ENCODE measurements at regions of chr17 and their contacts with region 1.

Region 1: DNA sequence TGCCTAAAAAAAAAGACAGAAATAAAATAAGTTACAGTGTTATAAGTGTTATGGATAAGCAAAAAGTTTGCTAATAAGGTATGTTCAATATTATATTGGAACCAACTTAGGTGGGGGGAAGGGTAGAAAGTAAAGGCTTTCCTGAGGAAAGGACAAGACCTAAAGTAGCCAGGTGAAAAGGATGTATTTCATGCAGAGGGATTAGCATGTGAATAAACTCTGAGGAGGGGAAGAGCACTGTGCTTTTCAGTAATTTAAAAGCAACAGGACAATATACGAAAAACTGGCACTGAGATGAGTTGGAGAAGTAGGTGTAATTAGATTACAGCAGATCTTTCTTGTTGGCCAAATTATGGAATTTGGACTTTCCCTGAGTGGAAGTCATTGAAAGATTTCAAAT is 7.6 kb downstream of the TOP2A start:
- DNase-seq: no peak
- H3K4me3 ChIP-seq: no peak overlapping the region
- H3K27ac ChIP-seq: no peak overlapping the region
- H3K4me1 ChIP-seq: peaks cover under 1% of the 10 kb centered on the region
- H3K27me3 ChIP-seq: no peaks in the 10 kb centered on the region
- CTCF ChIP-seq: no peak
- EP300 ChIP-seq: no peak
- POLR2A ChIP-seq: no peak

Region 2: DNA sequence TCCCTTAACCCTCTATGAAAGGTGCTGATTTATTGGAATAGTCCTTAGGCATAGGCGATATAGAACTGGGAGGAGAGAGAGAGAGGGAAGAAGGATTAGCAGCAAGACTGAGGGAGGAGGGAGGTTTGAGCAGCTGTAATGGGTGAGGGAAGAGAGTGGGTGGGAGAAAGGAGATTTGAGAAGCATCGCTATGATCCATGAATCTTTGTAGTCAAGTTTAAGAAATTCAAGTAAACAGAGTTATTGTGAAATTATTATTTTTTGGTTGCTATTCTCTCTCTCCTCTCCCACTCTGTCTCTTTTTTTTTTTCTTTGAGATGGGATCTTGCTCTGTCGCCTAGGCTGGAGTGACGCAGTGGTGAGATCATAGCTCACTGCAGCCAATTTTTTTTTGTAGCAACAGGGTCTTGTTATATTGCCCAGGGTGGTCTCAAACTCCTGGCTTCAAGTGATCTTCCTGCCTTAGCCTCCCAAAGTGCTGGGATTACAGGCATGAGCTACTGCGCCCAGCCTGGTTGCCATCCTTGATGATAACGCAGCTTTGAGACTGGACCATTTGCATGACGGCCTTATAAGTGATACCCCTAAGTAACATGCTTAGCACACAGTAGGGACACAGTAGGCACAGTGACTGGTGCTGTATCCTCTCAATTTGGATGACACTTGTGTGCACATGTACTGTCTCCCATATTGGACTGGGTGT is 112.3 kb after region 1 on chr17:
- intact Hi-C with region 1: loop called in 1 of 4 experiments (anchors 5 kb)
- DNase-seq: peak in 1 of 5 donors; percentile 13
- H3K4me3 ChIP-seq: no peak overlapping the region
- H3K27ac ChIP-seq: no peak overlapping the region
- H3K4me1 ChIP-seq: no peaks in the 10 kb centered on the region
- H3K27me3 ChIP-seq: no peaks in the 10 kb centered on the region
- CTCF ChIP-seq: no peak
- EP300 ChIP-seq: no peak
- POLR2A ChIP-seq: no peak

Measured in ovary (tissue), 10 donors.